Activated CD8-positive, alpha-beta T cell treated with anti-CD3 and anti-CD28 coated beads for 36 hours (primary cell): ENCODE measurements at regions of chr17 and their contacts with region 1.

Region 1: DNA sequence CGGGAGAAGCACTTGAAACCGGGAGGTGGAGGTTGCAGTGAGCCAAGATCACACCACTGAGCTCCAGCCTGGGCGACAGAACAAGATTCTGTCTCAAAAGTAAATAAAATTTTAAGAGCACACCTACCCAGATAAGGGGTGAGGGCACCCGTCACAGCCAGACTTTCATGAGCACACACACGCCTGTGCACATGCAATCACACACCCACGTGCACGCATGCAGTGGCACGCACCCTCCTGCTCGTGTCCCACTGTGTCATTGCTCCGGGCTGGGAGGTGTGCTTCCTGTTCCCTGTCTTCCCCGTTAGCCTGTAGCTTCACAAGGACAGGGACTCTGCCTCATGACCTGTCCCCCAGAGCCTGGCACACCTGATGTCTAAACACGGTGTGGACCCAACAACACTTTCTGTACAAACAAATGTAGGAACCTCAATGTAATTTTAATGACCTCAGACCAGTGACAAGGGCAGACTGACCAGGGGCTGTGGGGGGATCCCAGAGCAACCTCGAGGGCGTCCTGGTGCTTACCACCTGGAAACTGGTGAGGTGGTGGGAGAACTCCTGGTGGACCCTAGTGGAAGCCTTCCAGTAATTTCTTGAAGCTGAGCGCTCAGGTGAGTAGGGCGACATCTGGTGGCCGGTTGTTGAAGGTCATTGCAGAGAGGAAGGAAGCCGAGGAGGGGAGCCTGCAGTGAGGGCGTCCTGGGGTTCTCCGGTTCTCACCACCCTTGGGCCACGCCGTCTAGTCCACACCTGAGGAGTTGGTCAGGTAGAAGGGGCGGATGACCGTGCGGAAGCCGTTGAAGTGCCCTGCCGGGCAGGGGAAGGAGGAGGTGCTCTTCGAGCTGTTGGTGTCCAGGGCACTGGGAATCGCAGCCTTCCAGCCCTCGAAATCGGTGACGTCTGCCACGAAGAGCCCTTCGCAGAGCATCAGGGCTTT is 8.6 kb downstream of the LGALS3BP start:
- DNase-seq: peak; percentile 91
- ATAC-seq: peak; percentile 80
- H3K4me3 Mint-ChIP-seq: no peak overlapping the region
- H3K27ac Mint-ChIP-seq: no peak overlapping the region
- H3K4me1 Mint-ChIP-seq: peaks cover 5% of the 10 kb centered on the region
- H3K27me3 Mint-ChIP-seq: no peaks in the 10 kb centered on the region
- CTCF ChIP-seq: peak; percentile 95

Region 2: DNA sequence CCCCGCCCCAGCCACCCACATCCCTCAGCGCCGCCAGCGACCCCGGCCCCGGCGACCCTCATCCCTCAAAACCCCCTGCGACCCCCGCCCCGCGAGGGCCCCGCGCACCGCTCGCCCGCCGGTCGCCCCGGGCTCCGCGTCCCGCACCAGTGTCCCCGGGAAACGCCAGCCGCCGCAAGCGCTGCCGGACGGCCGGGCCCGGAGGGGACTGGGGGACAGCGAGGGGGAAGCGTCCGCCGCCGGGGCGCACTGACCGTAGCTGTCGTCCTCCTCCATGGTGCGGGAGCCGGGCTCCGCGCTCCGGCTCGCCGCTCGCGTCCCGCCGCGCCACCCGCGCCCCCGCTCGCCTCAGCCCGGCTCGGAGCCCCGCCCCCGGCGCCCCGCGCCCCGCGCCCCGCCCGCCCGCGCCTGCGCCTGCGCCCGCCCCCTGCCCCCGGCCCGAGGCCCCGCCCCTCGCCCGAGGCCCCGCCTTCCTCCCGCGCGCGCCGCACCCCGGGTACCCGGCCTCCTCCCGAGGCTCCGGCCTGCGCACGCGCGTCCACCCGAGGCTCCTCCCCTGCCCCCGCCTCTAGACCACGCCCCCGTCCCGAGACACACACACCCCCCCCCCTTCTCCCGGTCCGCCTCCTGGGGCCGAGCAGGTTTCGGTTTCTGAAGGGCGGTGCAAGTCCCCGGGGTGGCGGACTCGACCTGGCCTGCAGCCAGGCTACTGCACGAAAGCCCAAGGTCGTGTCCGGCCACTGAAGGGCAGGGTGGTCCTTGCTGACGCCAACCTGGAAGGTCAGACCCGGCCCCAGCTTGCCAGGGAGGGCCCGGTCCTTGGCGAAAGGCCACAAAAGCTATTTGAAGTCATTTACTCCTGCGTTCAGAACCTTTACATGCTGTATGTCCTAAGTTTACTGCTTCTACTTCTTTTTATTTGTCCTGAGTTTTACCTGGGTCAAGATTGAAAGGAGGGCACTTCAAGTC is 188.9 kb before region 1 on chr17 and contains the start of gene CYTH1:
- CTCF ChIA-PET with region 1: no interaction called
- POLR2A ChIA-PET with region 1: no interaction called
- intact Hi-C with region 1: no loop called
- DNase-seq: peak; percentile 96
- ATAC-seq: peak; percentile 80
- H3K4me3 Mint-ChIP-seq: peak within 1 kb of the TSS; percentile 79
- H3K27ac Mint-ChIP-seq: peak within 1 kb of the TSS; percentile 99
- H3K4me1 Mint-ChIP-seq: peaks cover 46% of the 10 kb centered on the region
- H3K27me3 Mint-ChIP-seq: no peaks in the 10 kb centered on the region
- CTCF ChIP-seq: no peak
- total RNA-seq, gene CYTH1: 95.1 to 96.0 TPM

Region 3: DNA sequence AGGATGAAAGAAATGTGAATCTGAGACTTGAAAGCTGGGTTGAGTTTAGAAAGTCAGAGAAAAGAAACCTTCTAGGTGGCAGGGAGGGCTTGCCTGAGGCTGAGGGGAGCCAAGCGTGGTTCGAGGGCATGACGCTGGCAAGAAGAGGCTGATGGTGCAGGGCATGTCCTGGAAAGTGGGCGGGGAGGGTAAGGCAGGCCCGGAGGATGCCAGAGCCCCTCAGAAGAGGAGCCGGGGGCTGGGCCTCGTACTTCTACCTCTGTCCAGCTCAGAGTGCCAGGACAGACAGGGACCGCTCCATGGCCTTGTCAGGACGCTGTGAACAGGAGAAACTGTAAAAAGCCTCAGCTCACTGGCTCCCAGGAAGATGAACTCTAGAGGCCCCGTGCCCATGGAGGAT is 28.1 kb before region 1 on chr17:
- CTCF ChIA-PET with region 1: interaction called, 10 read pairs
- POLR2A ChIA-PET with region 1: no interaction called
- intact Hi-C with region 1: no loop called
- DNase-seq: no peak
- ATAC-seq: no peak
- H3K4me3 Mint-ChIP-seq: no peak overlapping the region
- H3K27ac Mint-ChIP-seq: no peak overlapping the region
- H3K4me1 Mint-ChIP-seq: no peaks in the 10 kb centered on the region
- H3K27me3 Mint-ChIP-seq: no peaks in the 10 kb centered on the region
- CTCF ChIP-seq: no peak

Region 4: GRCh38 chr17:78986048-78986648 is 15.0 kb after region 1 on chr17:
- CTCF ChIA-PET with region 1: interaction called, 22 read pairs
- POLR2A ChIA-PET with region 1: no interaction called
- intact Hi-C with region 1: no loop called
- DNase-seq: peak; percentile 57
- ATAC-seq: peak; percentile 80
- H3K4me3 Mint-ChIP-seq: peak overlapping the region; percentile 45
- H3K27ac Mint-ChIP-seq: no peak overlapping the region
- H3K4me1 Mint-ChIP-seq: peaks cover 15% of the 10 kb centered on the region
- H3K27me3 Mint-ChIP-seq: no peaks in the 10 kb centered on the region
- CTCF ChIP-seq: peak; percentile 50

Region 5: GRCh38 chr17:79065105-79065670 is 94.1 kb after region 1 on chr17:
- CTCF ChIA-PET with region 1: no interaction called
- POLR2A ChIA-PET with region 1: no interaction called
- intact Hi-C with region 1: no loop called
- DNase-seq: peak; percentile 79
- ATAC-seq: peak; percentile 82
- H3K4me3 Mint-ChIP-seq: peak overlapping the region; percentile 23
- H3K27ac Mint-ChIP-seq: peak overlapping the region; percentile 55
- H3K4me1 Mint-ChIP-seq: peaks cover 5% of the 10 kb centered on the region
- H3K27me3 Mint-ChIP-seq: peaks cover 2% of the 10 kb centered on the region
- CTCF ChIP-seq: peak; percentile 75